WTC11 (cell line): ENCODE measurements at regions of chr6 and their contacts with region 1.

Region 1: GRCh38 chr6:9842004-9842725 is 572.7 kb downstream of the TFAP2A start:
- DNase-seq: no peak
- ATAC-seq: peak; percentile 74
- H3K4me3 Mint-ChIP-seq: no peak overlapping the region
- H3K27ac Mint-ChIP-seq: no peak overlapping the region
- H3K4me1 Mint-ChIP-seq: peaks cover 42% of the 10 kb centered on the region
- H3K27me3 Mint-ChIP-seq: no peaks in the 10 kb centered on the region; the same call in 1 of the 2 replicates
- CTCF ChIP-seq: no peak

Region 2: GRCh38 chr6:9437836-9438235 is 404.3 kb before region 1 on chr6:
- CTCF ChIA-PET with region 1: no interaction called
- POLR2A ChIA-PET with region 1: interaction called, 10 read pairs
- DNase-seq: no peak
- ATAC-seq: no peak
- H3K4me3 Mint-ChIP-seq: no peak overlapping the region
- H3K27ac Mint-ChIP-seq: no peak overlapping the region
- H3K4me1 Mint-ChIP-seq: peaks cover 10% of the 10 kb centered on the region
- H3K27me3 Mint-ChIP-seq: no peaks in the 10 kb centered on the region
- CTCF ChIP-seq: no peak

Region 3: DNA sequence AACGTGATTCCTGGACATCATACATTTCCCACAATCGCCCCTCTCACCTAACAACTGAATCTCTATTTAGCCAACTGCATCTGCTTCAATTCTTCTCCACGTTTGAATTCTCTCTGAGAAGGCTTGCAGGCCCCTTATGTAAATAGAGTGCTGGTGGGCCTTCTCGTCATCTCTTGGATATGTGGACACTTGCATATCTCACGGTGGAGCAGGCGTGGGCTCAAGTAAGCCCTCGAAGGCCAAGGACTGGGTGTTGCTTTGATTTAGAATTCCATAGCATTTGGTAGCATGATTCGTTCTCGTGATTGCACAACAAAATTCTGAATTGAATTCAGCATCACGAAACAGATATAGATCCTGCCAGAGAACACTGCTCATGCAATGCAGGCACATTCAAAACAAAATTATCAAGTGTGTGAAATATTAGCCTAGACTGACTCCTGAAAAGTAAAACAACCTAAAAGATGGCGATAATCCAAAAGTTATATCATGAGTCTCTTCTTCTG is 40.9 kb before region 1 on chr6:
- CTCF ChIA-PET with region 1: no interaction called
- POLR2A ChIA-PET with region 1: no interaction called
- DNase-seq: no peak
- ATAC-seq: no peak
- H3K4me3 Mint-ChIP-seq: no peak overlapping the region
- H3K27ac Mint-ChIP-seq: no peak overlapping the region
- H3K4me1 Mint-ChIP-seq: peaks cover 13% of the 10 kb centered on the region
- H3K27me3 Mint-ChIP-seq: no peaks in the 10 kb centered on the region
- CTCF ChIP-seq: no peak

Region 4: DNA sequence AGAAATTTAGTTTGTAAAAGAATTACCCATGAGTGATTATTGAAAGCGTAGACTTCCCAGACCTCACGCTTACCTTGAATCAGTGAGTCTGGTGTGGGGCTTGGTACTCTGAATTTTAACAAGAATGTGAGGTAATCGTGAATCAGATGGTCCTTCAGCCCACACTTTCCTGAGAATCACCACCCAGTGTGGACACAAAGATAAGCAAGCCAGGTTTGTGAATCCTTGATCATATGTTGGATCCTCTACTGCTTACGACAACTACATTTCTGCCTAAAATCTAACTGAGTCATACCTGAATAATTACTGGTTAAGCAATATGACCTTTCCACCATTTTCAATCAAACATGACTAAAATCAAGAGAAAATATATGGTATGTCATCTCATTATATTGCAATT is 16.6 kb before region 1 on chr6:
- CTCF ChIA-PET with region 1: no interaction called
- POLR2A ChIA-PET with region 1: no interaction called
- DNase-seq: no peak
- ATAC-seq: no peak
- H3K4me3 Mint-ChIP-seq: no peak overlapping the region
- H3K27ac Mint-ChIP-seq: no peak overlapping the region
- H3K4me1 Mint-ChIP-seq: peaks cover 4% of the 10 kb centered on the region
- H3K27me3 Mint-ChIP-seq: no peaks in the 10 kb centered on the region
- CTCF ChIP-seq: no peak

Region 5: GRCh38 chr6:9875615-9876353 is 33.6 kb after region 1 on chr6:
- CTCF ChIA-PET with region 1: no interaction called
- POLR2A ChIA-PET with region 1: no interaction called
- DNase-seq: no peak
- ATAC-seq: no peak
- H3K4me3 Mint-ChIP-seq: no peak overlapping the region
- H3K27ac Mint-ChIP-seq: no peak overlapping the region
- H3K4me1 Mint-ChIP-seq: no peaks in the 10 kb centered on the region
- H3K27me3 Mint-ChIP-seq: no peaks in the 10 kb centered on the region
- CTCF ChIP-seq: no peak

Region 6: DNA sequence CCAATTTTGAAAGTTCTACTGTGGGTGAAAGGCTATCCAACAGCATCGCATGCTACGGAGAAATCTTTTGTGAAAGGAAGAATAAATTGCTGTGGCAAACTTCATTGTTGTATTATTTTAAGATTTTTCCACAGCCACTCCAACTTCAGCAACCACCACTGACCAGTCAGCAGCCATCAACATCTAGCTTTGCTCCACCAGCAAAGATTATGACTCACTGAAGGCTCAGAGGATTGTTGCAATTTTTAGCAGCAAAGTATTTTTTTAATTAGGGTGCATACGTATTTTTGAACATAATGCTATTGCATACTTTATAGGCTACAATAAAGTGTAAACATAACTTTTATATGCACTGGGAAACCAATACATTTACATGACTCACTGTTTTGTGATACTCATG is 79.2 kb after region 1 on chr6:
- CTCF ChIA-PET with region 1: no interaction called
- POLR2A ChIA-PET with region 1: no interaction called
- DNase-seq: no peak
- ATAC-seq: no peak
- H3K4me3 Mint-ChIP-seq: no peak overlapping the region
- H3K27ac Mint-ChIP-seq: no peak overlapping the region
- H3K4me1 Mint-ChIP-seq: no peaks in the 10 kb centered on the region
- H3K27me3 Mint-ChIP-seq: no peaks in the 10 kb centered on the region; the same call in 1 of the 2 replicates
- CTCF ChIP-seq: no peak